ENCODE measurements at regions of chr1 and their contacts with region 1.

Region 1: GRCh38 chr1:165327538-165327937 is 29.0 kb downstream of the LMX1A start:
- DNase-seq: no peak
- ATAC-seq: no peak
- H3K4me3 ChIP-seq: no peak overlapping the region
- H3K4me3 Mint-ChIP-seq: no peak overlapping the region
- H3K27ac ChIP-seq: no peak overlapping the region
- H3K27ac Mint-ChIP-seq: no peak overlapping the region
- H3K4me1 ChIP-seq: no peaks in the 10 kb centered on the region
- H3K4me1 Mint-ChIP-seq: no peaks in the 10 kb centered on the region
- H3K27me3 ChIP-seq: no peaks in the 10 kb centered on the region
- H3K27me3 Mint-ChIP-seq: peaks cover 38% of the 10 kb centered on the region
- CTCF ChIP-seq: no peak

Region 2: GRCh38 chr1:165228676-165229075 is 98.9 kb before region 1 on chr1:
- CTCF ChIA-PET with region 1: no interaction called
- POLR2A ChIA-PET with region 1: no interaction called
- intact Hi-C with region 1: no loop called
- DNase-seq: no peak
- ATAC-seq: no peak
- H3K4me3 ChIP-seq: no peak overlapping the region
- H3K4me3 Mint-ChIP-seq: no peak overlapping the region
- H3K27ac ChIP-seq: no peak overlapping the region
- H3K27ac Mint-ChIP-seq: no peak overlapping the region
- H3K4me1 ChIP-seq: no peaks in the 10 kb centered on the region
- H3K4me1 Mint-ChIP-seq: no peaks in the 10 kb centered on the region
- H3K27me3 ChIP-seq: peaks cover 0 to under 1% of the 10 kb centered on the region in 2 experiments
- H3K27me3 Mint-ChIP-seq: peaks cover 9% of the 10 kb centered on the region
- CTCF ChIP-seq: no peak

Region 3: GRCh38 chr1:165298203-165298820 is 29.2 kb before region 1 on chr1:
- CTCF ChIA-PET with region 1: no interaction called
- POLR2A ChIA-PET with region 1: no interaction called
- intact Hi-C with region 1: loop called in 1 of 2 experiments (anchors 1 kb)
- DNase-seq: no peak
- ATAC-seq: no peak
- H3K4me3 ChIP-seq: no peak overlapping the region
- H3K4me3 Mint-ChIP-seq: no peak overlapping the region
- H3K27ac ChIP-seq: no peak overlapping the region
- H3K27ac Mint-ChIP-seq: no peak overlapping the region
- H3K4me1 ChIP-seq: no peaks in the 10 kb centered on the region
- H3K4me1 Mint-ChIP-seq: no peaks in the 10 kb centered on the region
- H3K27me3 ChIP-seq: no peaks in the 10 kb centered on the region
- H3K27me3 Mint-ChIP-seq: peaks cover 8% of the 10 kb centered on the region
- CTCF ChIP-seq: no peak

Measured in CD8-positive, alpha-beta T cell (primary cell).